Breast epithelium (tissue), 4 donors: ENCODE measurements at regions of chr1 and their contacts with region 1.

Region 1: DNA sequence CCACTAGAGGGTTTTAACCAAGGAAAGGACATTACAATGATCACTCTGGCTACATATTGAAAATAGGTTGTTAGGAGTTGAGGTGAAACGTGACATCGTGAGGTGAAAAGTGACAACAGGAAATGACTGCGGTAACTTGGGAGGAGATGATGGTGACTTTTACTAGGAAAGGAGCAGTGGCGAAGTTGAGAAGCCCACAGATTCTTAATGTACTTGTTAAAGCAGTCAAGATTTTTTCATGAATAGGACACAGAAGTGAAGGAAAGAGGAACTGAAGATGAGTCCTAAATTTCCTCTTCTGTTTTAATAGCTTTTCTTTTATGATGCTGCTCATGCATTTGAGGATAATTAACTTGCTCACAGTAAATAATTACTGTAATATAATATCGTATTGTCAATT is 59.5 kb downstream of the OMA1 start:
- DNase-seq: no peak
- H3K4me3 ChIP-seq: no peak overlapping the region
- H3K27ac ChIP-seq: no peak overlapping the region
- H3K4me1 ChIP-seq: no peaks in the 10 kb centered on the region
- H3K27me3 ChIP-seq: no peaks in the 10 kb centered on the region
- CTCF ChIP-seq: no peak
- POLR2A ChIP-seq: no peak

Region 2: DNA sequence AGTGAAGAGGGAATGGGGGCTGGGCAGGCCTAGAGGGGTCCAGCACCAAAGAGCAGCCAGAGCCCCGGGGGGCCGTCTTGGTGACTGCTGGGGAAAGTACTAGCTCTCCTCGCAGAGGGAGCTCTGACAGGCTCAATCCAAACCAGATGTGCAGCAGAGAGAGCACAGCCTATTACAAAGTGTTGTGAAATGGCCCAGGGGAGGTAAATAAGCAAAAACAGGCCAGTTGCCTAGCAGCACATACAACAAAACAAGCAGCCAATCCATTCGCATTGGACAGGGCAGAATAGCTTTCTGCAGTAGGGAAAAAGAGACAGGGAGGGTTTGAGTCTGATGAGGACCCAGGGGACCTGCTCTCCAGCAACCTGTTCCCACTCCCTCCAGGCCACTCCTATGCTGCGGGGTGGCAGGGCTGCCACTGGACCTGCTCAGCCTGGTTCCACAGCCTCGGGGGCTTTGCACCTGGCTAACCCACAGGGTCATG is 570.3 kb after region 1 on chr1:
- intact Hi-C with region 1: loop called (anchors 5 kb)
- DNase-seq: peak; percentile 64 to 75
- H3K4me3 ChIP-seq: peak overlapping the region in 1 of 3 donors; percentile 7
- H3K27ac ChIP-seq: peak overlapping the region; percentile 76 to 89
- H3K4me1 ChIP-seq: peaks cover 0 to 7% of the 10 kb centered on the region in 2 donors
- H3K27me3 ChIP-seq: no peaks in the 10 kb centered on the region
- CTCF ChIP-seq: no peak
- POLR2A ChIP-seq: no peak